A549 (cell line): ENCODE measurements at regions of chr16 and their contacts with region 1.

Region 1: GRCh38 chr16:50806099-50807062 is 64.5 kb downstream of the CYLD start:
- DNase-seq: peak; percentile 76 to 88
- ATAC-seq: peak; percentile 94 to 96
- H3K4me3 ChIP-seq: peak overlapping the region; percentile 26; the same call in 2 of the 3 replicates
- H3K27ac ChIP-seq: peak overlapping the region in 1 of 2 experiments; percentile 56; a peak in 1 of 6 replicates
- H3K4me1 ChIP-seq: no peaks in the 10 kb centered on the region
- CTCF ChIP-seq: peak; percentile 95
- EP300 ChIP-seq: no peak
- POLR2A ChIP-seq: no peak
- RAD21 ChIP-seq: peak; percentile 68 to 76

Region 2: GRCh38 chr16:50671644-50672260 is 134.6 kb before region 1 on chr16:
- CTCF ChIA-PET with region 1: interaction called, 35 read pairs
- POLR2A ChIA-PET with region 1: no interaction called
- DNase-seq: peak in 1 of 2 experiments; percentile 62
- ATAC-seq: peak in 1 of 2 experiments; percentile 71; a peak in 3 of 6 replicates
- H3K4me3 ChIP-seq: no peak overlapping the region
- H3K27ac ChIP-seq: no peak overlapping the region
- H3K4me1 ChIP-seq: no peaks in the 10 kb centered on the region
- CTCF ChIP-seq: peak; percentile 37; the same call in 2 of the 3 replicates
- EP300 ChIP-seq: no peak
- POLR2A ChIP-seq: no peak
- RAD21 ChIP-seq: peak; percentile 14 to 31; a peak in 2 of 5 replicates

Region 3: GRCh38 chr16:50741808-50742575 is 64.4 kb before region 1 on chr16 and contains the start of gene CYLD:
- CTCF ChIA-PET with region 1: interaction called, 10 read pairs
- POLR2A ChIA-PET with region 1: no interaction called
- DNase-seq: peak; percentile 98 to 99
- ATAC-seq: peak; percentile 97 to 99
- H3K4me3 ChIP-seq: peak within 1 kb of the TSS; percentile 96
- H3K27ac ChIP-seq: peak within 1 kb of the TSS; percentile 72 to 86
- H3K4me1 ChIP-seq: peaks cover 3% of the 10 kb centered on the region; the same call in 1 of the 3 replicates
- CTCF ChIP-seq: no peak
- EP300 ChIP-seq: no peak
- POLR2A ChIP-seq: no peak
- RAD21 ChIP-seq: no peak
- polyA plus RNA-seq, gene CYLD: 11.2 and 12.7 TPM in 2 replicates

Region 4: DNA sequence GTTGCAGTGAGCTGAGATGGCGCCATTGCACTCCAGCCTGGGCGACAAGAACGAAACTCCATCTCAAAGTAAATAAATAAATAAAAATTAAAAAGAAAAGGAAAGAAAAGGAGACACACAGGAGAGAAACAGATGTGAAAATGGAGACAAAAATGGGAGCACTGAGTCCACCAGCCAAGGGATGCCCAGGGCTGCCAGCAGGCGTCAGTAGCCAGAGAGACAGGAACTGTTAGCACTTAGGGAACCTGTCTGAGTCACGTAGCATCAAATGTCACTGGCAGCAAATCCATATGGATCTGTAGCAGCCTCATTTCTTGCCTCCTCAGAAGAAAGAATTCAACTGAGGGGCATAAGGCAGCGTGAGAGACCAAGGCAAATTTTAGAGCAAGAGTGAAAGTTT is 15.2 kb after region 1 on chr16:
- CTCF ChIA-PET with region 1: interaction called, 27 read pairs
- POLR2A ChIA-PET with region 1: no interaction called
- DNase-seq: peak in 1 of 2 experiments; percentile 21
- ATAC-seq: peak; percentile 69 to 70; a peak in 4 of 6 replicates
- H3K4me3 ChIP-seq: no peak overlapping the region
- H3K27ac ChIP-seq: no peak overlapping the region
- H3K4me1 ChIP-seq: no peaks in the 10 kb centered on the region
- CTCF ChIP-seq: no peak
- EP300 ChIP-seq: no peak
- POLR2A ChIP-seq: no peak
- RAD21 ChIP-seq: no peak

Region 5: DNA sequence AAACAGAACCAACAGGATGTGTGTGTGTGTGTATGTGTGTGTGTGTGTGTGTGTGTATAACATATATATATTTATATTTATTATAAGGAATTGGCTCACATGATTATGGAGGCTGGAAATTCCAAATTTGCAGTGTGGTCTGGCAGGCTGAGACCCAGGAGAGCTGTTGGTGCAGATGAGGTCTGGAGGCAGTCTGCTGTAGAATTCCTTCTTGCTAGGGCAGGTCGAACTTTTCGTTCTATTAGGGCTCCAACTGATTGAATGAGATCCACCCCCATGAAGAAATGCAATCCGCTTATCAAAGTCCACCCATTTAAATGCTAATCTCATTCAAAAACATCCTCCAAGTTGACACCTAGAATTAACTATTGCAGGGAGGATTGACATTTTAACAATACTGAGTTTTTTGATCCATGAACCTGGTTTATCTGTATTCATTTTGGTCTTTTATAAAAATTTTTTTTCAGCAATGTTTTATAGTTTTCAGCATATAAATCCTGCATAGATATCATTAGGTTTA is 20.5 kb after region 1 on chr16:
- CTCF ChIA-PET with region 1: interaction called, 15 read pairs
- POLR2A ChIA-PET with region 1: no interaction called
- DNase-seq: no peak
- ATAC-seq: no peak
- H3K4me3 ChIP-seq: no peak overlapping the region
- H3K27ac ChIP-seq: no peak overlapping the region
- H3K4me1 ChIP-seq: no peaks in the 10 kb centered on the region
- CTCF ChIP-seq: no peak
- EP300 ChIP-seq: no peak
- POLR2A ChIP-seq: no peak
- RAD21 ChIP-seq: no peak

Region 6: GRCh38 chr16:51982715-51983680 is 1176.6 kb after region 1 on chr16:
- CTCF ChIA-PET with region 1: interaction called, 13 read pairs
- POLR2A ChIA-PET with region 1: no interaction called
- DNase-seq: peak; percentile 25 to 76
- ATAC-seq: peak; percentile 67 to 75; a peak in 3 of 6 replicates
- H3K4me3 ChIP-seq: no peak overlapping the region
- H3K27ac ChIP-seq: no peak overlapping the region
- H3K4me1 ChIP-seq: no peaks in the 10 kb centered on the region
- CTCF ChIP-seq: peak; percentile 75
- EP300 ChIP-seq: no peak
- POLR2A ChIP-seq: no peak
- RAD21 ChIP-seq: peak; percentile 87 to 90